Activated naive CD4-positive, alpha-beta T cell treated with anti-CD3 and anti-CD28 coated beads for 36 hours (primary cell): ENCODE measurements at regions of chr4 and their contacts with region 1.

Region 1: DNA sequence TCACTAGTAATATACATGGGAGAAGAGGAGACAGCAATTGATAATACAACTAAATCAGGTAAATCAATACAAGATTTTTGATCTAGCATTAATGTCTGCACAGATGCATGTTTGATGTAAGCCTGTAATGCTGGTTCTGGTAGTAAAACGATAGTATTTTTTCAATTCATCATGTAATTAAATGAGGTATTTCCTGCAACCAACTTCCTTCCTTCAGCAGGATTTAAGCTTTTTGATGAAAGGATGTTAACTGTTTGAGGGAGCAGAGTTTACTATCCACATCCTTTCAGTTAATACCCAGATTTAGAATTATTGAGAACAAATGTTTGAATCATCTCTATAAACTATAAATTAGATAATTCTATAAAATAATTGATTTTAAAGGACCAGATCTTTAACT is 31.4 kb upstream of the NFKB1 start:
- DNase-seq: no peak
- H3K4me3 Mint-ChIP-seq: no peak overlapping the region
- H3K27ac Mint-ChIP-seq: no peak overlapping the region
- H3K4me1 Mint-ChIP-seq: peaks cover 37% of the 10 kb centered on the region
- H3K27me3 Mint-ChIP-seq: no peaks in the 10 kb centered on the region

Region 2: GRCh38 chr4:102493794-102494193 is 24.0 kb after region 1 on chr4:
- CTCF ChIA-PET with region 1: no interaction called
- intact Hi-C with region 1: loop called (anchors 2 kb)
- DNase-seq: no peak
- H3K4me3 Mint-ChIP-seq: no peak overlapping the region
- H3K27ac Mint-ChIP-seq: no peak overlapping the region
- H3K4me1 Mint-ChIP-seq: peaks cover 25% of the 10 kb centered on the region
- H3K27me3 Mint-ChIP-seq: no peaks in the 10 kb centered on the region